K562 (cell line): ENCODE measurements at regions of chr5 and their contacts with region 1.

Region 1: GRCh38 chr5:54249210-54250028 is 61.0 kb downstream of the ARL15 start:
- DNase-seq: peak; percentile 20 to 68 (median 38)
- ATAC-seq: peak; percentile 66
- H3K4me3 ChIP-seq: no peak overlapping the region
- H3K27ac ChIP-seq: peak overlapping the region; percentile 33; the same call in 1 of the 3 replicates
- H3K4me1 ChIP-seq: peaks cover 8 to 24% of the 10 kb centered on the region in 2 experiments
- H3K27me3 ChIP-seq: no peaks in the 10 kb centered on the region
- CTCF ChIP-seq: no peak
- EP300 ChIP-seq: no peak
- POLR2A ChIP-seq: no peak
- RAD21 ChIP-seq: no peak

Region 2: GRCh38 chr5:53779541-53779981 is 469.9 kb before region 1 on chr5:
- CTCF ChIA-PET with region 1: no interaction called
- POLR2A ChIA-PET with region 1: no interaction called
- in situ Hi-C with region 1: no loop called
- intact Hi-C with region 1: no loop called
- DNase-seq: no peak
- ATAC-seq: no peak
- H3K4me3 ChIP-seq: no peak overlapping the region
- H3K27ac ChIP-seq: no peak overlapping the region
- H3K4me1 ChIP-seq: no peaks in the 10 kb centered on the region
- H3K27me3 ChIP-seq: peaks cover 13 to 24% of the 10 kb centered on the region in 2 experiments; a peak in 4 of 5 replicates
- CTCF ChIP-seq: no peak
- EP300 ChIP-seq: no peak
- POLR2A ChIP-seq: no peak
- RAD21 ChIP-seq: no peak

Region 3: DNA sequence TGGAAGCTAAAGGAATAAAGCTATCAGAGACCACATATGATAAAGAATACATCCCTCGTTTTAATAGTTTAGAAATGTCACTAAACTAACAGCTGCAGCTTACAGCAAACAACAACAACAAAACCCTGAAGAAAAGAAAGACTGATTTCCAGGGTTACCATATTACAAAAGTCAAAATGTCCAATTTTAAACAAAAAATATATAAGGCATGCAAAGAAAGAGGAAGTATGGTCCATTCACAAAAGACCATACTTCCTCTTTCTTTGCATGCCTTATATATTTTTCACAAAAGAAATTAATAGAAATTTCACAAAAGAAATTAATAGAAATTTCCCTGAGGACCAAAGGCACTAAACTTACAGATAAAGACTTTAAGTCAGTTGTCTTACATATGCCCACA is 293.2 kb before region 1 on chr5:
- CTCF ChIA-PET with region 1: no interaction called
- POLR2A ChIA-PET with region 1: no interaction called
- in situ Hi-C with region 1: no loop called
- intact Hi-C with region 1: no loop called
- DNase-seq: no peak
- ATAC-seq: no peak
- H3K4me3 ChIP-seq: no peak overlapping the region
- H3K27ac ChIP-seq: no peak overlapping the region
- H3K4me1 ChIP-seq: no peaks in the 10 kb centered on the region
- H3K27me3 ChIP-seq: no peaks in the 10 kb centered on the region
- CTCF ChIP-seq: no peak
- EP300 ChIP-seq: no peak
- POLR2A ChIP-seq: no peak
- RAD21 ChIP-seq: no peak

Region 4: GRCh38 chr5:54480296-54480695 is 230.9 kb after region 1 on chr5:
- CTCF ChIA-PET with region 1: no interaction called
- POLR2A ChIA-PET with region 1: no interaction called
- in situ Hi-C with region 1: loop called (anchors 10 kb)
- intact Hi-C with region 1: no loop called
- DNase-seq: no peak
- ATAC-seq: no peak
- H3K4me3 ChIP-seq: no peak overlapping the region
- H3K27ac ChIP-seq: no peak overlapping the region
- H3K4me1 ChIP-seq: no peaks in the 10 kb centered on the region; a peak in 2 of 5 replicates
- H3K27me3 ChIP-seq: no peaks in the 10 kb centered on the region
- CTCF ChIP-seq: no peak
- EP300 ChIP-seq: no peak
- POLR2A ChIP-seq: no peak
- RAD21 ChIP-seq: no peak